WTC11 (cell line): ENCODE measurements at regions of chr14 and their contacts with region 1.

Region 1: GRCh38 chr14:57962325-57963035 is 96.6 kb upstream of the SLC35F4 start:
- DNase-seq: peak; percentile 81
- ATAC-seq: peak; percentile 96
- H3K4me3 Mint-ChIP-seq: 0 out of 2 replicates have a peak overlapping the region, but pooled peaks have one; percentile 18
- H3K27ac Mint-ChIP-seq: no peak overlapping the region; the same call in none of the 2 replicates
- H3K4me1 Mint-ChIP-seq: peaks cover 27% of the 10 kb centered on the region
- H3K27me3 Mint-ChIP-seq: peaks cover 5% of the 10 kb centered on the region; the same call in 1 of the 2 replicates
- CTCF ChIP-seq: no peak

Region 2: GRCh38 chr14:57692671-57693070 is 269.8 kb before region 1 on chr14:
- CTCF ChIA-PET with region 1: interaction called, 16 read pairs
- POLR2A ChIA-PET with region 1: no interaction called
- DNase-seq: no peak
- ATAC-seq: peak; percentile 46; the same call in 1 of the 2 replicates
- H3K4me3 Mint-ChIP-seq: no peak overlapping the region
- H3K27ac Mint-ChIP-seq: no peak overlapping the region
- H3K4me1 Mint-ChIP-seq: peaks cover 4% of the 10 kb centered on the region
- H3K27me3 Mint-ChIP-seq: no peaks in the 10 kb centered on the region
- CTCF ChIP-seq: peak; percentile 16; the same call in 1 of the 2 replicates

Region 3: DNA sequence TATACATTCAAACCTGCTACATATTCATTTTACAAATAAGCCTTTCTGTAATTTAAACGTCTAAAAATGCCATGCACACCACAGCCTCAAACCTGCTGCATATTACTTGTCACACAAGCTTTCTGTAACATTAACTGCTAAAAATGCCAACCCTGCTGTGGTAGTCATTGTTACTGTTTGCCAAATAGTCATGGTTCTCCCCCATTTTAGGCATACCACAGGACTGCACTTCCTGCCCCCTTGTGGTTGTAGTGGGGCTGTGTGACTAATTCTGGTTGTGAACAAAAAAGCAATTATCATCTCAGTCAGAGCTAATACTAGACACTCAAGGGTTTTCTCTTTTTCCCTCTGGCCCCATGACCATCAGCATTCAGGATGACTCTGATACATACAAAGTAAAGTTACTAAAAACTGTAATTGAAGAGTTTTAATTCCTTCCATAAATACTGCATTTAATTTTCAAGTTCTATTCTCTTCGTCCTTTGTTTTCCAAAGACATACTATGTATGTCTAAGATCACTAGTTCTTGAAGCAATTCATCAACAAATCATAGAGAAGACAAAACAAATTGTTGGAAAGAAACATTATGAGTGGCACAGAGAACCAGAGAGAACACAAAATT is 90.9 kb before region 1 on chr14:
- CTCF ChIA-PET with region 1: interaction called, 25 read pairs
- POLR2A ChIA-PET with region 1: no interaction called
- DNase-seq: peak; percentile 53
- ATAC-seq: peak; percentile 86
- H3K4me3 Mint-ChIP-seq: no peak overlapping the region
- H3K27ac Mint-ChIP-seq: no peak overlapping the region
- H3K4me1 Mint-ChIP-seq: peaks cover 24% of the 10 kb centered on the region
- H3K27me3 Mint-ChIP-seq: peaks cover 7% of the 10 kb centered on the region
- CTCF ChIP-seq: peak; percentile 71

Region 4: GRCh38 chr14:57943038-57943437 is 19.4 kb before region 1 on chr14:
- CTCF ChIA-PET with region 1: interaction called, 11 read pairs
- POLR2A ChIA-PET with region 1: no interaction called
- DNase-seq: no peak
- ATAC-seq: peak; percentile 50
- H3K4me3 Mint-ChIP-seq: no peak overlapping the region
- H3K27ac Mint-ChIP-seq: 0 out of 2 replicates have a peak overlapping the region, but pooled peaks have one; percentile 1
- H3K4me1 Mint-ChIP-seq: peaks cover 37% of the 10 kb centered on the region
- H3K27me3 Mint-ChIP-seq: no peaks in the 10 kb centered on the region; the same call in 1 of the 2 replicates
- CTCF ChIP-seq: no peak